Head of caudate nucleus (tissue), 42 donors: ENCODE measurements at regions of chr17 and their contacts with region 1.

Region 1: DNA sequence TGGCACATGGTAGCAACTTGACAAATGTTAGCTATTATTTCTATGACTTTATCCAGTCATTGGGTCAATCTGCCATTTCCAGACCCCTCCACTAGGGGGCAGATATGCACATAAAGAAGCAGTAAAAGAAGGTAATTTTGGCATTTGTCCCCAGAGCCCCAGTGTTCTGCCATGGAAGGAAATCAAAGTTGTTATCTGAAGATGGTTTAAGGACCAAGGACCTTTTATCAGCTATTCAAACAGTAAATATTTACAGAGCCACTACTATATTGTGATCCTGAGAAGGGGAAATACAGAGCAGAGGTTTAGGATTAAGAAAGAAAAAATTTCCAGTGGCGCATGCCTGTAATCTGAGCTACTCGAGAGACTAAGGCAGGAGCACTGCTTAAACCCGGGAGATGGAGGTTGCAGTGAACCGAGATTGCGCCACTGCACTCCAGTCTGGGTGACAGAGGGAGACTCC is 20.0 kb downstream of the TRAF4 start:
- DNase-seq: peak in 39 of 42 donors; percentile 61 to 95 (median 81)

Region 2: GRCh38 chr17:28532991-28533807 is 230.6 kb before region 1 on chr17:
- intact Hi-C with region 1: no loop called
- DNase-seq: peak in 1 of 42 donors; percentile 42

Region 3: DNA sequence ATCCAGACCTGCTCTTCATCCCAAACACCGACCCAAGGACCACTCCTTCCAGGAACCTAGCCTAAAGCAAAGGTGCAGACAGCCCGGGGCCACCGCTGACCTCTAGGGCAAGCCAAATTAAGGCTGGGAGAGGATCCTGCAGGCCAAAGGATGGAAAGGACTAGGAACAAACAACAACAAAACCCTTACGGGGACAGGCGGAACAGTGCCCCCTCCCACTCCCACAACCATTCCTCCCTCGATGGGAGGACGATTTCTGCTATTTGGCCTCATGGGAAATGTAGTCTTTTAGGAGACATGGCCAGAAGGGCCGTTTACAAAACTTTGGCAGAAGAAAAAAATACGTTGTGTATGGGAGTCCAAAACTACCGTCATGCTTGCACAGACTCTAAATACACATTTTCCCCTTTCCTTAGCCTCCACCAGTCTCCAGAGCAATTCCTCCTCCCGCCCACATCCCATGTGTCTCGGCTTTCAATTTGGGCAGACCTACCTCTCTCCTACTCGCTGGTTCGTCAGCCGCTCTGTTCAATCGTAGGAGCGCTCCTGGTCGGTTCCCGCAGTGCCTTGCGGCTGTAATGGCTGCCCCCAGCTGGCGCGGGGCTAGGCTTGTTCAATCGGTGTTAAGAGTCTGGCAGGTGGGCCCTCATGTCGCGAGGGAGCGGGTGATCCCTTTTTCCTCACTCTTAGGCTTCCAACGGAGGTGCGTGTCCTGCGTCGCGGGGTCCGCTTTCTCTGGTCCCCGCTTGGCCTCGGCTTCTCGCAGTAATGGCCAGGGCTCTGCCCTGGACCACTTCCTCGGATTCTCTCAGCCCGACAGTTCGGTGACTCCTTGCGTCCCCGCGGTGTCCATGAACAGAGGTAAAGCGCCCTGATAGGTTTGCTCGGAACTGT is 90.9 kb after region 1 on chr17 and contains the start of gene ERAL1:
- intact Hi-C with region 1: loop called (anchors 10 kb)
- DNase-seq: peak; percentile 77 to 97 (median 92)

Region 4: DNA sequence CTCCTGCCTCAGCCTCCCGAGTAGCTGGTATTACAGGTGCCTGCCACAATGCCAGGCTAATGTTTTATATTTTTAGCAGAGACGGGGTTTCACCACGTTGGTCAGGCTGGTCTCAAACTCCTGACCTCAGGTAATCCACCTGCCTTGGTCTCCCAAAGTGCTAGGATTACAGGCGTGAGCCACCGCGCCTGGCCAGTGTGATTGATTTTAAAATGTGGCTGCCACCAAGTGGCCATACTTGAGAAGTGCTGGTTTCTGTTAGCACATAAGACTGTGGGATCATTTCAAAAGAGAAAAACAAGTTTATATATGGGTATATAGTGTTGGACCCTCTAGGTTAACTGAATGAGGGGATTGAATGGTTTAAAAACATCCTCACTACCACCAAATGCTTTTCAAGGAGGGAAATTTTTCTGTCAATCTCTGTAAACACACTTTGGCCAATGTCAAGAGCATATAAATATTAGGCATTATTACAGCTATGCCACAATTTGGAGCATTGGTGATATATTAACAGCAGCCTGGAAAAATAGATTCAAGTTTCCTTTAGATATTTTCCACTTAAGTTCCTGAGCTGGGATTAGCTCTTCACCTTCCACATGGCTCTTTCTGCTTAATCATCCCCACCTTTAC is 152.6 kb after region 1 on chr17:
- intact Hi-C with region 1: loop called (anchors 10 kb)
- DNase-seq: peak in 37 of 42 donors; percentile 28 to 82 (median 51)

Region 5: DNA sequence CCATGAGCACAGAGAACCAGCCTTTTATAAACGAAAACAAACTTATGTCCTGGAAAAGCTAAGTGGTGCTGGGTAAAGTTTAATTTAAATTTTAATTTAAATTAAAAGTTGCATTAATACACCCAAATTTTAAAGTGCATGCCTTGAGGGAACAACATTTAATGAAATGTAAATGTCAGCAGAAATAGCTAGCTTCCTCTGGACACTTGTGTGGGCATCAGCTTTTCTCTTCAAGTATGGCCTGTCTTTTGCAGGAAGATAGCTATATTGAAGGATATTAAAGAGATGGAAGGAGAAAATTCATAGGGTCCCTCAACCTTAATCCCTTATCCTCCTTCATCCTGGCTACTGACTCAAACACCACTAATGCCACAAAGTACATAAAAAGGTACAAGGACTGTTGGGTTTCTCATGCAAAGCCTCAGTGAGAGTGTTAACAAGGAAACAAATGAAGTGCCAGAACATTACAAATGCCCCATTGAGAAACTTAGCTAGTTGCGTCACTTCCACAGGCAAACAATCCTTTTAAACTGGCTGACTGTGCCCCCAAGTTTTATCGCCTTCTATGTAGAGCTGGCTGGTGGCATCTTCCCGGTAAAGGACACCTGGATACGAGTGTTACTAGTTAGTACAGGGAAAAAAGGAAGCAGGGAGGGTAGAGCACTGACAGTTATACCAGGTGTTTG is 173.4 kb after region 1 on chr17:
- intact Hi-C with region 1: no loop called
- DNase-seq: peak in 20 of 42 donors; percentile 37 to 82 (median 56)